ENCODE measurements at regions of chr7 and their contacts with region 1.

Region 1: DNA sequence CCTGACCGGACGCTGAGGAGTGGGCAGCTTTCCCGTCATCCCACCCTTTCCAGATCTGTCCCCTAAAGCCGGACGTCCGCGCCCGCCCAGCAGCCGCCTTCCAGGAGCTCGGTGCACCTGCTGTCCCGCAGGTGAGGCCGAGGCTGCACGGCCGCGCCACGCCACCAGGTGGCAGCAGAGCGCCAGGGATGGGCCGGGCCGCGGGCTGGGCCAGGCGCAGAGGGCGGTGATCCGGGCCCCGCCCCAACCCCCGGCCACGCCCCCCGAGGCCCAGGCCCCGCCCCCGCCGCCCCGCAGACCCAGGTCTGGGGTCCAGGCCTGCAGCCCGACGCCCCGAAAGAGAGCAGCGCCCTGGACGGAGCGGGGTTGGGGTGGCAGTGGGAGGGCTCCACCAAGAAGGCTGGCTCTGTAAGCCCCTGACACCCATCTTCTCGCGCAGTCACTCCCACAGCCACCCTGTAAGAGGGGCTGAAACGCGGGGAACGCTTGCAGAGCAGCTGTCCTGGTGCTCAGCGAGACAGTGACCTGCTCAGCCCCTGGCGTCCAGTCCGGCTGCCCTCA is 32.2 kb downstream of the FOXL3 start:
- DNase-seq: peak; percentile 85
- ATAC-seq: peak; percentile 100
- H3K4me3 Mint-ChIP-seq: no peak overlapping the region
- H3K27ac Mint-ChIP-seq: no peak overlapping the region
- H3K4me1 Mint-ChIP-seq: peaks cover 2% of the 10 kb centered on the region
- H3K27me3 Mint-ChIP-seq: peaks cover 26% of the 10 kb centered on the region
- CTCF ChIP-seq: peak; percentile 66

Region 2: GRCh38 chr7:726084-726853 is 404.1 kb after region 1 on chr7 and contains the start of gene DNAAF5:
- CTCF ChIA-PET with region 1: no interaction called
- POLR2A ChIA-PET with region 1: no interaction called
- intact Hi-C with region 1: loop called (anchors 5 kb)
- DNase-seq: peak; percentile 87
- ATAC-seq: peak; percentile 89
- H3K4me3 Mint-ChIP-seq: peak within 1 kb of the TSS; percentile 83
- H3K27ac Mint-ChIP-seq: peak within 1 kb of the TSS; percentile 65
- H3K4me1 Mint-ChIP-seq: peaks cover 22% of the 10 kb centered on the region
- H3K27me3 Mint-ChIP-seq: no peaks in the 10 kb centered on the region
- CTCF ChIP-seq: no peak
- total RNA-seq, gene DNAAF5: 23.5 and 25.9 TPM in 2 replicates

Region 3: DNA sequence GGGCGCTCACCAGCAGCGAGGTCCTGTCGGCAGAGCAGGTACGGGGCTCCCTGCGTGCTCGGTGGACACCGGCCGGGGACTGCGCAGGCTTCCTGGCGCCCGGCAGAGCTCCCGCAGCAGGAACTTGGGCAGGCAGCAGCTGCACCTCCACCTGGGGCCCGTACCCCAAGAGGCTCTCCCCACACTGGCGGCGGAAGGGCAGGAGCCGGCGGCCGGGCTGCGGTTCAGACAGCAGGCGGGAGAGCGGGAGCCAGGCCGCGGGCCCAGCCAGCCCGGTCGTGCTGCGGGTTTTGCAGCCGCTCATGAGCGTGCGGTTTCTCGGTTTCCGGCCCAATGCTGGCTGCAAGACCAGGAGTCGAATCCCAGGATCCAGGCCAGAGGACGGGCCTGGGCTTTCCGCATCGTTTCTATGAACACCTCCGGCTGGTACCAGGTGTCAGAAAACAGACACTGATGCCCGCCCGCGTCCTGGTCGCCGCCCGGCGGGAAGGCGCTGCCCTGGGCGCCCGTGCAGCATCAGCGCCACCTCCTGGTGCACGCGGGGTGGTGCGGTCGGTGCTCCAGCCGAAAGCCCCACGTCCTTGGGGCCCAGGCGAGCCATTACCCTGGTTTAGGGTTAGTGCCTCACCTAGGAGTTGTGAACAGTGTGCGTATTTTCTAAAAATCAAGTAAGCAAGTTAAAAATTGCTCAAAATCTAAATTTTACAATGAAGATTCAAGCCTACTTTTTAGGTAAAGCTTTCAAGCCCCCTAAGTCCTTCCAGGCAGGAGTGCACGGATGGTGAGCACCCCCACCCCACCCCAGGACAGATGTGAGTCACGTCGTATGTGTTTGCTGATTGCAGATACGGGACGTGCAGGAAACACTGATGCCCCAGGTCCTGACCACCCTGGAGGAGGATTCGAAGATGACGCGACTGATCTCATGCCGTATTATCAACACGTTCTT is 452.2 kb after region 1 on chr7:
- CTCF ChIA-PET with region 1: interaction called, 15 read pairs
- POLR2A ChIA-PET with region 1: no interaction called
- intact Hi-C with region 1: loop called (anchors 1 kb)
- DNase-seq: peak; percentile 60
- ATAC-seq: peak; percentile 94
- H3K4me3 Mint-ChIP-seq: no peak overlapping the region
- H3K27ac Mint-ChIP-seq: no peak overlapping the region
- H3K4me1 Mint-ChIP-seq: no peaks in the 10 kb centered on the region
- H3K27me3 Mint-ChIP-seq: no peaks in the 10 kb centered on the region
- CTCF ChIP-seq: peak; percentile 69

Region 4: GRCh38 chr7:1181640-1182039 is 859.4 kb after region 1 on chr7:
- CTCF ChIA-PET with region 1: no interaction called
- POLR2A ChIA-PET with region 1: no interaction called
- intact Hi-C with region 1: loop called (anchors 2 kb)
- DNase-seq: no peak
- ATAC-seq: no peak
- H3K4me3 Mint-ChIP-seq: no peak overlapping the region
- H3K27ac Mint-ChIP-seq: no peak overlapping the region
- H3K4me1 Mint-ChIP-seq: peaks cover 9% of the 10 kb centered on the region
- H3K27me3 Mint-ChIP-seq: peaks cover 40% of the 10 kb centered on the region
- CTCF ChIP-seq: no peak